Heart right ventricle (tissue), 16 donors: ENCODE measurements at regions of chr19 and their contacts with region 1.

Region 1: DNA sequence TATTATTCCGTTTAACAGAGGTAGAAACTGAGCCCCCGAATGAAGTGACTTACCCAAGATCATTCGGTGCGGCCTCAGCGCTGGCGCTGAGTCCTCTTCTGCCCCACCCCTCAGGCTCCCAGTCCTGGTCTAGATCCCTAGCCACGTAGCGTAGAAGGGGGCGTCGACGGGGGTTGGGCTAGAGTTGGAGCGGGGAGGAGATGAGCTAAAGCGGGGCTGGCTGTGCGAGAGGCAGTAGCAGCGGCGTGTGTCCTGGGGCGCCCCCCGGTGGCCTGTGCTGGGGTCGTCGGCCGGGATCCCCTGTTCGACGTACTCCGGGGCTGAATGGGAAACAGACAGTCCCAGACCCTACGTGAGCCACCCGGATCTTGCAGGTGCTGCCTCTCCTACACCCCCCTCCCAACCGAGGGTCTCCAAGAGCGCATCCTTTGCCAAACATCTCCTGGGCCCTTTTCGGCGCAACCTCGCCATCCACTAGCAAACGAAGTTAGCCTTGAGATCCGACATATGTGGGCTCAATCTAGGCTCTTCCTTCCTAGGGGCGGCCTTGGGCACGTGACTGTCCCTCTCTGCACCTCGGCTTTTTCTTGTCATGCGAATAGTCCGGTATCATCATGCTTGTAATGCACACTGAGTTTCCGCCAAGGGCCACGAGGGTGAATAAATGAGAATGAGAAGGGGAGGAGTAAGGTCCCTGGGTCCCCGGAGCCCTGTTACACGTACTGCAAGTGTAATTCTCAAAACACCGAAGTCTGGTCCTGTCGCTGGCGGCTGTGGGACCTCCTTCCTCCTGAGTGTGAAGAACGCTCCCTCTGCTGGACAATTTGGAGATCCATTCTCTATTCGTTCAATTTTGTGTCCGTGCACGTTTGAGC is 47.7 kb downstream of the CYP4F22 start:
- DNase-seq: peak; percentile 88 to 92
- ATAC-seq: peak; percentile 92 to 96 (median 94)
- H3K4me3 ChIP-seq: peak overlapping the region in 8 of 10 donors; percentile 8 to 39 (median 32)
- H3K27ac ChIP-seq: no peak overlapping the region
- H3K4me1 ChIP-seq: peaks cover 3 to 21% (median 16%) of the 10 kb centered on the region in 9 donors
- H3K27me3 ChIP-seq: peaks cover 0 to 59% (median 30%) of the 10 kb centered on the region in 7 donors
- CTCF ChIP-seq: peak; percentile 64 to 81 (median 75)

Region 2: GRCh38 chr19:15177269-15178116 is 378.5 kb before region 1 on chr19:
- intact Hi-C with region 1: loop called (anchors 1 to 5 kb)
- DNase-seq: peak; percentile 70 to 86
- ATAC-seq: peak; percentile 76 to 88 (median 83)
- H3K4me3 ChIP-seq: peak overlapping the region in 4 of 10 donors; percentile 14 to 39 (median 27)
- H3K27ac ChIP-seq: peak overlapping the region in 1 of 10 donors; percentile 40
- H3K4me1 ChIP-seq: peaks cover 0 to 13% (median 5%) of the 10 kb centered on the region in 9 donors
- H3K27me3 ChIP-seq: peaks cover 0 to 22% (median 7%) of the 10 kb centered on the region in 7 donors
- CTCF ChIP-seq: peak; percentile 90 to 99 (median 95)

Region 3: DNA sequence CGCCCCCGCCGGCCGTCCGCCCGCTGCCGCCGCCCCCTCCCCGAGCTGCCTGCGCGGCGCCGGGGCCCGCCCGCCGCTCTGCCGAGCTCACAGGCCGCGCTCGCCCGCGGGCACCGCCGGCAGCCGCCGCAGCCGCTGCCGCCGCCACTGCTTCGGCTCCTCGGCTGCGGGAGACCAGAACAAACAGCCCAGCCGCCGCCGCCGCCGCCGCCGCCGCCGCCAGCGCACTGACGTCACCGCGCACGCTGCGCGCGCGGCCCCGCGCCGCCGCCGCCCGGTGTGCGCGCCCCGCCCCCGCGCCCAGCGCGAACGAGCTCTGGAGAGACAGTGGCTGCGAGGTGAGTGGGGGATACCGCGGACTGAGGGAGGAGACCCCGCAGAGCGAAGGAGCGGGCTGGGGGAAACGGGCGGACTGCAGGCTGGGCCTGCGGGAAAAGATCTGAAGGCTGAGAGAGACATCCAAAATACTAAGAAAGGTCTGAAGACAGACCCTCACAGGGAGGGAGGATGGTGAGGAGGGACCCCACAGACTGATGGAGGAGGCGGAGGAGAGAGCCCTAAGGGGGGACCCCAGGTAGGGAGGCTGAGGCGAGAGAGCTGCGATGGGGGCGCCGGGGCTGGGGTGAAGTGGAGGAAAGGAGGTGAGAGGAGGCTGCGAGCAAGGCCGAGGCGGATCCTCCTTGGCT is 223.5 kb before region 1 on chr19 and contains the start of gene BRD4:
- intact Hi-C with region 1: loop called in 1 of 10 experiments (anchors 10 kb)
- DNase-seq: peak; percentile 64 to 80
- ATAC-seq: peak; percentile 69 to 86 (median 81)
- H3K4me3 ChIP-seq: peak within 1 kb of the TSS; percentile 90 to 99 (median 96)
- H3K27ac ChIP-seq: peak within 1 kb of the TSS; percentile 84 to 96 (median 93)
- H3K4me1 ChIP-seq: peaks cover 5 to 76% (median 55%) of the 10 kb centered on the region in 9 donors
- H3K27me3 ChIP-seq: no peaks in the 10 kb centered on the region
- CTCF ChIP-seq: no peak
- total RNA-seq, gene BRD4: 51.6 to 85.1 (median 54.7) TPM

Region 4: GRCh38 chr19:15418588-15419412 is 137.2 kb before region 1 on chr19 and contains the start of gene AKAP8L:
- intact Hi-C with region 1: loop called in 4 of 10 experiments (anchors 1 to 10 kb)
- DNase-seq: peak; percentile 97 to 100
- ATAC-seq: peak; percentile 95 to 98 (median 97)
- H3K4me3 ChIP-seq: peak within 1 kb of the TSS; percentile 69 to 99 (median 92)
- H3K27ac ChIP-seq: peak within 1 kb of the TSS; percentile 42 to 93 (median 90)
- H3K4me1 ChIP-seq: peaks cover 4 to 70% (median 36%) of the 10 kb centered on the region in 9 donors
- H3K27me3 ChIP-seq: no peaks in the 10 kb centered on the region
- CTCF ChIP-seq: peak; percentile 35 to 84 (median 70)
- total RNA-seq, gene AKAP8L: 45.2 to 101 (median 63.1) TPM

Region 5: GRCh38 chr19:15466851-15467733 is 88.9 kb before region 1 on chr19:
- intact Hi-C with region 1: loop called in 2 of 10 experiments (anchors 5 to 10 kb)
- DNase-seq: no peak
- ATAC-seq: peak in 3 of 8 donors; percentile 7 to 32 (median 31)
- H3K4me3 ChIP-seq: no peak overlapping the region
- H3K27ac ChIP-seq: peak overlapping the region in 1 of 10 donors; percentile 76
- H3K4me1 ChIP-seq: peaks cover 0 to 54% (median 7%) of the 10 kb centered on the region in 9 donors
- H3K27me3 ChIP-seq: peaks cover 5 to 87% (median 56%) of the 10 kb centered on the region in 7 donors
- CTCF ChIP-seq: no peak

Region 6: GRCh38 chr19:15511671-15512424 is 44.1 kb before region 1 on chr19:
- intact Hi-C with region 1: no loop called
- DNase-seq: no peak
- ATAC-seq: no peak
- H3K4me3 ChIP-seq: no peak overlapping the region
- H3K27ac ChIP-seq: no peak overlapping the region
- H3K4me1 ChIP-seq: peaks cover 0 to 15% (median 4%) of the 10 kb centered on the region in 9 donors
- H3K27me3 ChIP-seq: peaks cover 0 to 53% (median 49%) of the 10 kb centered on the region in 7 donors
- CTCF ChIP-seq: no peak

Region 7: GRCh38 chr19:15672580-15673175 is 116.7 kb after region 1 on chr19 and contains the start of gene CYP4F12:
- intact Hi-C with region 1: no loop called
- DNase-seq: peak; percentile 88 to 92
- ATAC-seq: peak; percentile 95 to 100 (median 98)
- H3K4me3 ChIP-seq: peak within 1 kb of the TSS in 8 of 10 donors; percentile 3 to 40 (median 25)
- H3K27ac ChIP-seq: peak within 1 kb of the TSS in 9 of 10 donors; percentile 20 to 78 (median 56)
- H3K4me1 ChIP-seq: peaks cover 0 to 15% (median 10%) of the 10 kb centered on the region in 9 donors
- H3K27me3 ChIP-seq: peaks cover 0 to 13% (median 0%) of the 10 kb centered on the region in 7 donors
- CTCF ChIP-seq: no peak
- total RNA-seq, gene CYP4F12: 0.92 to 6.8 (median 2.7) TPM